Mammary epithelial cell (primary cell): ENCODE measurements at regions of chr16 and their contacts with region 1.

Region 1: GRCh38 chr16:89052890-89053592 is 40.6 kb upstream of the ACSF3 start:
- DNase-seq: peak; percentile 62
- H3K4me3 ChIP-seq: peak overlapping the region; percentile 37 to 63 (median 63)
- H3K27ac ChIP-seq: no peak overlapping the region
- H3K4me1 ChIP-seq: peaks cover 22% of the 10 kb centered on the region
- H3K27me3 ChIP-seq: peaks cover 9% of the 10 kb centered on the region
- CTCF ChIP-seq: no peak

Region 2: GRCh38 chr16:88811769-88812512 is 241.1 kb before region 1 on chr16 and contains the start of gene APRT:
- CTCF ChIA-PET with region 1: no interaction called
- dilution Hi-C with region 1: no loop called
- in situ Hi-C with region 1: no loop called
- intact Hi-C with region 1: loop called (anchors 5 kb)
- DNase-seq: peak; percentile 91
- H3K4me3 ChIP-seq: peak within 1 kb of the TSS; percentile 50 to 69 (median 67)
- H3K27ac ChIP-seq: peak within 1 kb of the TSS; percentile 14
- H3K4me1 ChIP-seq: peaks cover 29% of the 10 kb centered on the region
- H3K27me3 ChIP-seq: no peaks in the 10 kb centered on the region
- CTCF ChIP-seq: peak in 1 of 2 donors; percentile 38
- total RNA-seq, gene APRT: 51.5 to 136 TPM

Region 3: GRCh38 chr16:88999457-89000206 is 53.4 kb before region 1 on chr16:
- CTCF ChIA-PET with region 1: no interaction called
- dilution Hi-C with region 1: loop called (anchors 5 kb)
- in situ Hi-C with region 1: no loop called
- intact Hi-C with region 1: no loop called
- DNase-seq: peak; percentile 25
- H3K4me3 ChIP-seq: no peak overlapping the region
- H3K27ac ChIP-seq: no peak overlapping the region
- H3K4me1 ChIP-seq: no peaks in the 10 kb centered on the region
- H3K27me3 ChIP-seq: peaks cover 3% of the 10 kb centered on the region
- CTCF ChIP-seq: no peak

Region 4: DNA sequence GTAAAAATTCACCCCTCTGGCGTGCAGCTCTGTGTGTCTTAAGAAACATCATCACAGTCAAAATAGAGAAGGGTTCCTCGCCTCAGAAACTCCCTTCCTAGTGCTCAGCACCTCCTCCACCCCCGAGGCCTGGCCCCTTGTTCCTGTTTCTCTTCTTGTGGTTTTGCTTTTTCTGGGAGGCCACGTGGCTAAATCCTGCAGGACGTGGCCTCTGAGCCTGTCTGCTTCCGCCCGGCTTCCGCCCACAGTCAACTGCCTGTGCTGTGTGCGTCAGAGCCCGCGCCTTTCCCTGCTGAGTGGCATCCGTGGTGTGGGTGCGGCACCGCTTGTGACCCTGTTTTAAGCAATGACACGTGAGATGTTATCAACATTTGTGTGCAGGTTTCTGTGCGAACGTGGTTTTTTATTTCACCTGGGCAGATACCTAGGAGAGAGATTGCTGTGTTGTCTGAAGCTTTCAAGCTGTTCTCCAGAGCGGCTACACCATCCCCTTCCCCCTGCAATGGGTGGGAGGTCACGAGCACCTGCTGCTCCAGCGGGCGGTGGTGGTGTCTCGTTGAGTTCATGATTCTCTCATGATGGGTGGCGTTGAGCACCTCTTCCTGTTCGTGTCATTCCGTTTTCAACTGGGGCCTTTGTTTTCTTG is 62.3 kb after region 1 on chr16:
- CTCF ChIA-PET with region 1: no interaction called
- dilution Hi-C with region 1: loop called (anchors 5 kb)
- in situ Hi-C with region 1: no loop called
- intact Hi-C with region 1: no loop called
- DNase-seq: peak; percentile 61
- H3K4me3 ChIP-seq: no peak overlapping the region
- H3K27ac ChIP-seq: no peak overlapping the region
- H3K4me1 ChIP-seq: peaks cover 17% of the 10 kb centered on the region
- H3K27me3 ChIP-seq: no peaks in the 10 kb centered on the region
- CTCF ChIP-seq: no peak

Region 5: DNA sequence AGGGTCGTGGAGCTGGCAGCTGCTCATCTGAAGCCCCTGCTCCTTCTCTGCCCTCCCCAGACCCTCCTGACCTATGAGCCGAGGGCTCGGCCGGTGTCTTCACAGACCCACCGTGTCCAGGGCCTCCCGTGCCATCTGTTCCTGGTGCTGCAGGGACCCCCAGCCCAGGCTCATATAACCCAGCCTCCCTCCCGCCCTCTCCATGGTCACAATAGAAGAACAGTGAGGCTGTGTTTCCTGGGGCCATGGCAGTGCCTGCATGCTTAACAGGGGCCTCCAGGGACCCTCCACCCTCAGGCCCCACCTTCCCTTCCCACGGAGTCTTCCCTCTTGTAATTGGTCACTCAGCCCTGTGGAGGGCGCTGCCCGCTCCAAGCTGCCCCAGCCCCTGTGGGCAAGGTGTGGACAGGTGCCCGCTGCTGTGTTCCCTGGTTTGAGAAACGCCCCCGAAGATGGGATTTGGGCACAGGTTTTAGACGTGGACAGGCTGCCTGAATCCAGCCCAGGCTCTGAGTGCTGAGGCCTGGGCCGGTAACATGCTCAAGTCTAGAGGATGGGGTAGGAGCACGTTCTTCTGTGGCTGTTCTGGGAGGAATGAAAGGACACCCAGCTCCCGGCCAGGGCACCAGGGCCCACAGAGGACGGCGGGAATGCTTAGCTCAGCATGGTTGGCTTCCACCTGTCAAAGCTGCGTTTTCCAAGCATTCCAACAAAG is 79.4 kb after region 1 on chr16:
- CTCF ChIA-PET with region 1: no interaction called
- dilution Hi-C with region 1: no loop called
- in situ Hi-C with region 1: no loop called
- intact Hi-C with region 1: no loop called
- DNase-seq: no peak
- H3K4me3 ChIP-seq: no peak overlapping the region
- H3K27ac ChIP-seq: no peak overlapping the region
- H3K4me1 ChIP-seq: no peaks in the 10 kb centered on the region
- H3K27me3 ChIP-seq: no peaks in the 10 kb centered on the region
- CTCF ChIP-seq: no peak

Region 6: DNA sequence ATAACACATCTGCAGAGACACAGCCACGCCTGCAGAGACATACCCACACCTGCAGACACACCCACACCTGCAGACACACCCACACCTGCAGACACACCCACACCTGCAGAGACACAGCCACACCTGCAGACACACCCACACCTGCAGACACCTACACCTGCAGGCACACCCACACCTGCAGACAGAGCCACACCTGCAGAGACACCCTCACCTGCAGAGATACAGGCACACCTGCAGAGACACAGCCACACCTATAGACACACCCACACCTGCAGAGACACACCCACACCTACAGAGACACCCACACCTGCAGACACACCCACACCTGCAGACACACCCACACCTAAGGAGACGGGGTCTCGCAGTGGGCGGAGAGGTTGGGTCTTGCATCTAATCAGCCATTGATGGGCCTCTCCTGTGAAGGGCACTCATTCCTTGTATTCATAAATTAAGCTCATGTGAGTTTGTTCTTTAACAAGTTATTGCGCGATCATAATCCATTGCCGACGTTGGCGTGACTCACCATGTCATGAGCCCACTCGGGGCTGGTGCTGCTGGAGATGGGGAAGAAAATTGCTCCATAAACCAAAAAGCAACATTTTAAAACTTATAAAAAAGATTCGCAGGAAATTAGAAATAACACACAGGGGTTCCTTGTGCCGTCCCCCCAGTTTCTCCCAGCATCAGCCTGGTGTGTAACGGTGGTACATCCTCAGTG is 89.6 kb after region 1 on chr16:
- CTCF ChIA-PET with region 1: no interaction called
- dilution Hi-C with region 1: loop called (anchors 5 kb)
- in situ Hi-C with region 1: no loop called
- intact Hi-C with region 1: no loop called
- DNase-seq: no peak
- H3K4me3 ChIP-seq: no peak overlapping the region
- H3K27ac ChIP-seq: no peak overlapping the region
- H3K4me1 ChIP-seq: no peaks in the 10 kb centered on the region
- H3K27me3 ChIP-seq: no peaks in the 10 kb centered on the region
- CTCF ChIP-seq: no peak

Region 7: GRCh38 chr16:89155184-89155679 is 102.2 kb after region 1 on chr16:
- CTCF ChIA-PET with region 1: no interaction called
- dilution Hi-C with region 1: no loop called
- in situ Hi-C with region 1: no loop called
- intact Hi-C with region 1: loop called (anchors 5 kb)
- DNase-seq: no peak
- H3K4me3 ChIP-seq: no peak overlapping the region
- H3K27ac ChIP-seq: no peak overlapping the region
- H3K4me1 ChIP-seq: peaks cover 5% of the 10 kb centered on the region
- H3K27me3 ChIP-seq: no peaks in the 10 kb centered on the region
- CTCF ChIP-seq: no peak

Region 8: GRCh38 chr16:89171463-89172170 is 118.6 kb after region 1 on chr16 and contains the start of gene CDH15:
- CTCF ChIA-PET with region 1: no interaction called
- dilution Hi-C with region 1: loop called (anchors 5 kb)
- in situ Hi-C with region 1: no loop called
- intact Hi-C with region 1: no loop called
- DNase-seq: peak; percentile 92
- H3K4me3 ChIP-seq: peak within 1 kb of the TSS in 2 of 3 experiments; percentile 23 to 42
- H3K27ac ChIP-seq: no peak within 1 kb of the TSS
- H3K4me1 ChIP-seq: peaks cover 26% of the 10 kb centered on the region
- H3K27me3 ChIP-seq: no peaks in the 10 kb centered on the region
- CTCF ChIP-seq: no peak
- total RNA-seq, gene CDH15: 0.14 to 0.33 TPM